CD8-positive, alpha-beta memory T cell (primary cell): ENCODE measurements at regions of chr3 and their contacts with region 1.

Region 1: GRCh38 chr3:9932843-9933560 is 632 bp upstream of the CRELD1 start:
- DNase-seq: peak; percentile 83 to 93 (median 84)
- H3K4me3 ChIP-seq: peak overlapping the region; percentile 76
- H3K4me3 Mint-ChIP-seq: peak overlapping the region; percentile 88 to 99 (median 95)
- H3K27ac ChIP-seq: peak overlapping the region; percentile 90
- H3K27ac Mint-ChIP-seq: peak overlapping the region; percentile 93 to 100 (median 98)
- H3K4me1 ChIP-seq: peaks cover 32% of the 10 kb centered on the region
- H3K4me1 Mint-ChIP-seq: peaks cover 32 to 61% (median 33%) of the 10 kb centered on the region in 3 donors
- H3K27me3 ChIP-seq: no peaks in the 10 kb centered on the region
- H3K27me3 Mint-ChIP-seq: no peaks in the 10 kb centered on the region

Region 2: GRCh38 chr3:9890249-9891071 is 42.5 kb before region 1 on chr3 and contains the start of gene JAGN1:
- CTCF ChIA-PET with region 1: interaction called, 28 read pairs
- POLR2A ChIA-PET with region 1: interaction called, 21 read pairs
- DNase-seq: peak; percentile 85 to 94 (median 86)
- H3K4me3 ChIP-seq: peak within 1 kb of the TSS; percentile 97
- H3K4me3 Mint-ChIP-seq: peak within 1 kb of the TSS; percentile 97 to 100 (median 98)
- H3K27ac ChIP-seq: peak within 1 kb of the TSS; percentile 100
- H3K27ac Mint-ChIP-seq: peak within 1 kb of the TSS; percentile 99 to 100 (median 100)
- H3K4me1 ChIP-seq: peaks cover 13% of the 10 kb centered on the region
- H3K4me1 Mint-ChIP-seq: peaks cover 31 to 45% (median 40%) of the 10 kb centered on the region in 3 donors
- H3K27me3 ChIP-seq: no peaks in the 10 kb centered on the region
- H3K27me3 Mint-ChIP-seq: no peaks in the 10 kb centered on the region
- total RNA-seq, gene JAGN1: 55.5 to 59.0 TPM

Region 3: GRCh38 chr3:9946112-9947024 is 13.4 kb after region 1 on chr3:
- CTCF ChIA-PET with region 1: interaction called, 32 read pairs
- POLR2A ChIA-PET with region 1: interaction called, 28 read pairs
- DNase-seq: peak; percentile 74 to 85 (median 80)
- H3K4me3 ChIP-seq: peak overlapping the region; percentile 28
- H3K4me3 Mint-ChIP-seq: peak overlapping the region; percentile 68 to 82 (median 76)
- H3K27ac ChIP-seq: no peak overlapping the region
- H3K27ac Mint-ChIP-seq: peak overlapping the region; percentile 68 to 96 (median 87)
- H3K4me1 ChIP-seq: peaks cover 6% of the 10 kb centered on the region
- H3K4me1 Mint-ChIP-seq: peaks cover 6 to 7% (median 7%) of the 10 kb centered on the region in 3 donors
- H3K27me3 ChIP-seq: no peaks in the 10 kb centered on the region
- H3K27me3 Mint-ChIP-seq: no peaks in the 10 kb centered on the region

Region 4: GRCh38 chr3:9986237-9986725 is 53.3 kb after region 1 on chr3:
- CTCF ChIA-PET with region 1: interaction called, 20 read pairs
- POLR2A ChIA-PET with region 1: interaction called, 22 read pairs
- DNase-seq: no peak
- H3K4me3 ChIP-seq: peak overlapping the region; percentile 100
- H3K4me3 Mint-ChIP-seq: peak overlapping the region; percentile 93 to 97 (median 95)
- H3K27ac ChIP-seq: peak overlapping the region; percentile 97
- H3K27ac Mint-ChIP-seq: peak overlapping the region; percentile 95 to 99 (median 98)
- H3K4me1 ChIP-seq: peaks cover 27% of the 10 kb centered on the region
- H3K4me1 Mint-ChIP-seq: peaks cover 27 to 48% (median 34%) of the 10 kb centered on the region in 3 donors
- H3K27me3 ChIP-seq: no peaks in the 10 kb centered on the region
- H3K27me3 Mint-ChIP-seq: peaks cover 0 to 5% of the 10 kb centered on the region in 2 donors

Region 5: DNA sequence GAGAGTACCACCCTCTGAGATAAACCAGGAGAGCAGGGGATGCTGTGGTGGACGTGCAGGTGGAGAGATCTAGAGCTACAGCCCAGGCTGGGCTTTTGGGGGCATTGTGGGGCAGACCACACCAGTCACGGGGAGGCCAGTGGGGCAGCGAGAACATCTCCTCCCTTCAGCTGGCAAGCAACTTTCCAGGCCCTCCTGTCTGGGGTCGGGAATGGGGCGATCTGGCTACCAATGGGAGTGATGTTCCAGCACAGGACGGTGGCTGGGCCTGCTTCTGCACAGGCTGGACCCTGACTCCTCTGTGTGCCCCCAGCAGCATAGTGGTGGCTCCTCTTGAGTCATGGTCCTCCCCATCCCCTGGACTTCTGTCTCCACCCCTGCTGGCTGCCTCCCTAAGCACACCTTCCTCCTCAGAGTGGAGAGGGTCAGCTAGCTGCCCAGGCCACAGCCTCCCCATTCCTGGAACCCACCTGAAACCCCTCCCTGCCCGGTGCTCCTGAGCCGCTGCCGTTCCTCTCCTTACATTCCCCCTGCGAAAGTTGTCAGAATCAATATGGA is 247.8 kb after region 1 on chr3:
- CTCF ChIA-PET with region 1: no interaction called
- POLR2A ChIA-PET with region 1: no interaction called
- DNase-seq: no peak
- H3K4me3 ChIP-seq: no peak overlapping the region
- H3K4me3 Mint-ChIP-seq: no peak overlapping the region
- H3K27ac ChIP-seq: no peak overlapping the region
- H3K27ac Mint-ChIP-seq: peak overlapping the region in 2 of 8 donors; percentile 17 to 61
- H3K4me1 ChIP-seq: peaks cover 3% of the 10 kb centered on the region
- H3K4me1 Mint-ChIP-seq: peaks cover 13 to 28% (median 21%) of the 10 kb centered on the region in 3 donors
- H3K27me3 ChIP-seq: no peaks in the 10 kb centered on the region
- H3K27me3 Mint-ChIP-seq: no peaks in the 10 kb centered on the region

Region 6: GRCh38 chr3:10263646-10264363 is 330.8 kb after region 1 on chr3:
- CTCF ChIA-PET with region 1: interaction called, 13 read pairs
- POLR2A ChIA-PET with region 1: interaction called, 5 read pairs
- DNase-seq: peak; percentile 40 to 75 (median 54)
- H3K4me3 ChIP-seq: peak overlapping the region; percentile 56
- H3K4me3 Mint-ChIP-seq: peak overlapping the region; percentile 52 to 84 (median 68)
- H3K27ac ChIP-seq: peak overlapping the region; percentile 45
- H3K27ac Mint-ChIP-seq: peak overlapping the region; percentile 70 to 94 (median 90)
- H3K4me1 ChIP-seq: peaks cover 64% of the 10 kb centered on the region
- H3K4me1 Mint-ChIP-seq: peaks cover 73 to 91% (median 88%) of the 10 kb centered on the region in 3 donors
- H3K27me3 ChIP-seq: no peaks in the 10 kb centered on the region
- H3K27me3 Mint-ChIP-seq: no peaks in the 10 kb centered on the region

Region 7: DNA sequence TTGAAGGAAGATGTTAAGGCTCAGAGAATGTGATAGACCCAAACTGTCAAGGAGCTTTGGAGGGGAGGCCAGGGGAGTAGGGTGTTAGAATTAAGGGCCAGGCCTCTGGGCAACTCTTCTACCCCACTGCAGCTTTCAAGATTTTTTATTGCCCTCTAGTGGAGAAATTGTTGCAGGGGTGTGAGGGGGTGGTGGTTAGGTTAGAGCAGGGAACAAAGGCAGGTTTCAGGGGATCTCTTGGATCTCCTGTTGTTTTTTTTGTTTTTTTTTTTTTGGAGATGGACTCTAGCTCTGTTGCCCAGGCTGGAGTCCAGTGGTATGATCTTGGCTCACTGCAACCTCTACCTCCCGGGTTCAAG is 389.3 kb after region 1 on chr3:
- CTCF ChIA-PET with region 1: interaction called, 20 read pairs
- POLR2A ChIA-PET with region 1: interaction called, 4 read pairs
- DNase-seq: no peak
- H3K4me3 ChIP-seq: no peak overlapping the region
- H3K4me3 Mint-ChIP-seq: peak overlapping the region in 4 of 7 donors; percentile 8 to 96 (median 66)
- H3K27ac ChIP-seq: no peak overlapping the region
- H3K27ac Mint-ChIP-seq: peak overlapping the region in 6 of 8 donors; percentile 23 to 95 (median 54)
- H3K4me1 ChIP-seq: peaks cover 23% of the 10 kb centered on the region
- H3K4me1 Mint-ChIP-seq: peaks cover 23 to 34% (median 24%) of the 10 kb centered on the region in 3 donors
- H3K27me3 ChIP-seq: no peaks in the 10 kb centered on the region
- H3K27me3 Mint-ChIP-seq: peaks cover 3 to 16% of the 10 kb centered on the region in 2 donors